ENCODE measurements at regions of chr3 and their contacts with region 1.

Region 1: GRCh38 chr3:72996473-72997333 is at the start of gene PPP4R2:
- DNase-seq: peak; percentile 83 to 97 (median 91)
- ATAC-seq: peak; percentile 87
- H3K4me3 ChIP-seq: peak within 1 kb of the TSS; percentile 82 to 96
- H3K4me3 Mint-ChIP-seq: peak within 1 kb of the TSS; percentile 86
- H3K27ac ChIP-seq: peak within 1 kb of the TSS; percentile 89 to 92
- H3K27ac Mint-ChIP-seq: peak within 1 kb of the TSS; percentile 90
- H3K4me1 ChIP-seq: peaks cover 44% of the 10 kb centered on the region
- H3K4me1 Mint-ChIP-seq: peaks cover 46% of the 10 kb centered on the region
- H3K27me3 ChIP-seq: no peaks in the 10 kb centered on the region
- H3K27me3 Mint-ChIP-seq: no peaks in the 10 kb centered on the region
- CTCF ChIP-seq: no peak
- total RNA-seq, gene PPP4R2: 77.7 to 80.4 TPM

Region 2: DNA sequence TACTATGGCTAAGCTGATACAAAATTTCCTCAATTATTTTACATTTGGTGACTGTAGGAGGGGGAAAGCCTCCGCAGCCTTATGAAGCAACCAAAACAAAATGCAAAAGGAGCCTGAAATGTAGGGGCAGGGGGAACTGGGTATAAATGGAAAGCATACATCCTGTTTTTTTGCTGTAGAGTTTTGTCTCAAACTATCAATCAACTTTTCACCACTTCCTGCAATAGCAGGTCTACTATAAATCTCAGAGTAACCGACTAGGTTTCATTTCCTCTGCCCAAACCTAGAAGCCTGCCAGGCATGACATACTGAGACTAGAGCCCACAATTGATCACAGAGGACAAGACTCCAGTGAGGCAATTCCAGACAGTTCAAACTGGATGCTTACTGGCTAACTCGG is 239.8 kb before region 1 on chr3:
- CTCF ChIA-PET with region 1: no interaction called
- POLR2A ChIA-PET with region 1: no interaction called
- intact Hi-C with region 1: loop called in 1 of 2 experiments (anchors 10 kb)
- DNase-seq: peak in 8 of 9 experiments; percentile 10 to 80 (median 52)
- ATAC-seq: peak; percentile 97
- H3K4me3 ChIP-seq: peak overlapping the region in 1 of 2 experiments; percentile 38
- H3K4me3 Mint-ChIP-seq: peak overlapping the region; percentile 60
- H3K27ac ChIP-seq: peak overlapping the region; percentile 51 to 52
- H3K27ac Mint-ChIP-seq: peak overlapping the region; percentile 93
- H3K4me1 ChIP-seq: peaks cover 44% of the 10 kb centered on the region
- H3K4me1 Mint-ChIP-seq: peaks cover 59% of the 10 kb centered on the region
- H3K27me3 ChIP-seq: no peaks in the 10 kb centered on the region
- H3K27me3 Mint-ChIP-seq: no peaks in the 10 kb centered on the region
- CTCF ChIP-seq: no peak

Region 3: DNA sequence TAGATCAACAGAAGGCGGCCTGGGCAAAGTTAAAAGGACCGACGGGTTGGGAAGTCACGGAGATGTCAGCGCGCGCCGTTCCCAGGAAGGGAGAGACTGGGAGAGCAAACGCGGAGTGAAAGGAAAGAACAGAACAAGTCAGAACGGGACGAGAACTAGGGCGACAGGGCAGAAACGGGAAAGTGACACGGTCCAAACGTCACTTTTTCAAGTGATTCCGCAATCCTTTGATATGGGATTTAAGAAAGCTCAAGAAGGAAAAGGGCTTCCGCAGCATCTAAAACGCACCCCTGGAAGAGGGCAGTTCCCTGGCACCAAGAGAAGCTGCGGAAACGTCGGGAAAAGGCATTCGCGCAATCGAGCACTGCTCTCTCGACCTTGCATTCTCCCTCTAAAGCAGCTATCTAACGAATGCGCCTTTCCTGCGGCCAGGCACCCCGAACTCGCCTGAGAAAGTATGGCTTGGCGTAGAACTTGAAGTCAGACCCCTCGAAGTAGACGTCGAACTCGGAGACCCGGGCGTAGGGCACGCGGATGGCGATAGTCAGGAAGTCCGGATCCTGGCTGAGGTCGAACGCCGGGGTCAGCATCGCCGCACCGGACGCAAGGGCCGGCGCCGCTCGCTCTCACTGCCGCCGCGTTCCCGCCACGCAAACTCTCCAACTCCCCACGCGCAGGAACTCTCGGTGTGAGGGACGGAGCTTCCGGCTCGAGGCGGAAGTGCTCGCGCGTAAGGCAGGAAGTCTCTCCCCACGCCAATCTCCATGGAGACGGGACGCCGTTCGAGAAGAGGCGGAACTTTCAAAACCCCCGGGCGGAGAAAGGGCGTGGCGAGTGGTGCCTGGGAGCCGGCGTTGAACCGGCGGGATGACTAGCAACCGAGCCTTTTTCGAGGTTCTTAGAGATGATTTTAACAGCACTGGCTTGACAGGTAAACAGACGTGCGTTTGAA is 148.7 kb before region 1 on chr3 and contains the start of gene SHQ1:
- CTCF ChIA-PET with region 1: no interaction called
- POLR2A ChIA-PET with region 1: interaction called, 3 read pairs
- intact Hi-C with region 1: loop called (anchors 1 kb)
- DNase-seq: peak; percentile 84 to 98 (median 95)
- ATAC-seq: peak; percentile 90
- H3K4me3 ChIP-seq: peak within 1 kb of the TSS; percentile 64 to 92
- H3K4me3 Mint-ChIP-seq: peak within 1 kb of the TSS; percentile 95
- H3K27ac ChIP-seq: peak within 1 kb of the TSS; percentile 16 to 51
- H3K27ac Mint-ChIP-seq: peak within 1 kb of the TSS; percentile 80
- H3K4me1 ChIP-seq: peaks cover 23% of the 10 kb centered on the region
- H3K4me1 Mint-ChIP-seq: peaks cover 53% of the 10 kb centered on the region
- H3K27me3 ChIP-seq: no peaks in the 10 kb centered on the region
- H3K27me3 Mint-ChIP-seq: no peaks in the 10 kb centered on the region
- CTCF ChIP-seq: no peak
- total RNA-seq, gene SHQ1: 7.1 to 11.3 TPM

Region 4: DNA sequence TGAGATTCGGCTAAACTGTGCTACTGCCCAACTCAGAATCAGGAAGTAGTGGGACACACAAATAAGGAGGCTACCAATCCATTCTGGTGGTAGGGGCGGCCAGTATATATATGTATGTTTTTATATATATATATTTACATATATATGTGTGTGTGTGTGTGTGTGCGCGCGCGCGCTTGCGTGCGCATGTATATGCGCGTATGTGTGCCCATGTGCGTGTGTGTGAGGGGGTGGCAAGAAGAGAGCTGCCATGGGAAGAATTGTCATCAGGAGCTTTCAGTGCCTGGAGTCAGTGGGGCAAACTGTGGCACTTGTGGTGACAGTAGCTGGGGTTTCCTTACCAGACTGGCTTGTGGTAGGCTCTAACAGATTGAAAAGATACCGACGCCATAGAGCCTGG is 82.3 kb before region 1 on chr3:
- CTCF ChIA-PET with region 1: no interaction called
- POLR2A ChIA-PET with region 1: no interaction called
- intact Hi-C with region 1: no loop called
- DNase-seq: no peak
- ATAC-seq: no peak
- H3K4me3 ChIP-seq: no peak overlapping the region
- H3K4me3 Mint-ChIP-seq: no peak overlapping the region
- H3K27ac ChIP-seq: no peak overlapping the region
- H3K27ac Mint-ChIP-seq: no peak overlapping the region
- H3K4me1 ChIP-seq: no peaks in the 10 kb centered on the region
- H3K4me1 Mint-ChIP-seq: no peaks in the 10 kb centered on the region
- H3K27me3 ChIP-seq: no peaks in the 10 kb centered on the region
- H3K27me3 Mint-ChIP-seq: peaks cover 4% of the 10 kb centered on the region
- CTCF ChIP-seq: no peak

Region 5: GRCh38 chr3:72938471-72939265 is 58.0 kb before region 1 on chr3:
- CTCF ChIA-PET with region 1: interaction called, 3 read pairs
- POLR2A ChIA-PET with region 1: no interaction called
- intact Hi-C with region 1: loop called (anchors 2 kb)
- DNase-seq: peak in 5 of 9 experiments; percentile 4 to 70 (median 40)
- ATAC-seq: peak; percentile 100
- H3K4me3 ChIP-seq: no peak overlapping the region
- H3K4me3 Mint-ChIP-seq: no peak overlapping the region
- H3K27ac ChIP-seq: no peak overlapping the region
- H3K27ac Mint-ChIP-seq: no peak overlapping the region
- H3K4me1 ChIP-seq: no peaks in the 10 kb centered on the region
- H3K4me1 Mint-ChIP-seq: no peaks in the 10 kb centered on the region
- H3K27me3 ChIP-seq: no peaks in the 10 kb centered on the region
- H3K27me3 Mint-ChIP-seq: no peaks in the 10 kb centered on the region
- CTCF ChIP-seq: peak; percentile 64

Region 6: GRCh38 chr3:72969766-72970165 is 26.9 kb before region 1 on chr3:
- CTCF ChIA-PET with region 1: interaction called, 4 read pairs
- POLR2A ChIA-PET with region 1: no interaction called
- intact Hi-C with region 1: loop called in 1 of 2 experiments (anchors 2 kb)
- DNase-seq: no peak
- ATAC-seq: no peak
- H3K4me3 ChIP-seq: no peak overlapping the region
- H3K4me3 Mint-ChIP-seq: no peak overlapping the region
- H3K27ac ChIP-seq: no peak overlapping the region
- H3K27ac Mint-ChIP-seq: no peak overlapping the region
- H3K4me1 ChIP-seq: peaks cover 18% of the 10 kb centered on the region
- H3K4me1 Mint-ChIP-seq: peaks cover 18% of the 10 kb centered on the region
- H3K27me3 ChIP-seq: no peaks in the 10 kb centered on the region
- H3K27me3 Mint-ChIP-seq: no peaks in the 10 kb centered on the region
- CTCF ChIP-seq: no peak